CD4-positive, alpha-beta T cell (primary cell): ENCODE measurements at regions of chr6 and their contacts with region 1.

Region 1: DNA sequence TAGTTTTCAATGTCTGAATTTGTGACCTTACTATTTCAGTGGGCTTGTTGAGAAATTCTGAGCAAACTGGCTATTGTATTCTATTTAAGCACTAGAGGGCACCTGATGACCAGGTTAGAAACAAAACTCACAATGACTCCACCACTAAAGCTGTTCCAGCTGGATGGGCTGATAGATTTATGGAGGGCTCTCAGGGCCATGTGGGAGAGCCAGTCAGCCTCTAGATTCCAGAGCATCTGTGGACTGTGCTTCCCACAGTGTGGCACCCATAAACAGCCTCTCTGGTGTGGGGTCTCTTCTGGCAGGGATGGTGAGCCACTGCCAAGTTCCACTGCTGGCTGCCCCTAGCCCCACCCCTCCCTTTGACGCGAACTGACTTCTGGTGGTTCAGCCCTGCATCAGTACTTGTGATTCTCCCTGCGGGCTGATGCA is 29.2 kb downstream of the C6orf58 start:
- DNase-seq: peak in 3 of 14 experiments; percentile 18 to 26 (median 23)
- ATAC-seq: no peak
- H3K4me3 ChIP-seq: no peak overlapping the region
- H3K4me3 Mint-ChIP-seq: no peak overlapping the region
- H3K27ac ChIP-seq: no peak overlapping the region
- H3K27ac Mint-ChIP-seq: no peak overlapping the region
- H3K4me1 ChIP-seq: no peaks in the 10 kb centered on the region
- H3K4me1 Mint-ChIP-seq: no peaks in the 10 kb centered on the region
- H3K27me3 ChIP-seq: no peaks in the 10 kb centered on the region
- H3K27me3 Mint-ChIP-seq: no peaks in the 10 kb centered on the region
- CTCF ChIP-seq: no peak

Region 2: DNA sequence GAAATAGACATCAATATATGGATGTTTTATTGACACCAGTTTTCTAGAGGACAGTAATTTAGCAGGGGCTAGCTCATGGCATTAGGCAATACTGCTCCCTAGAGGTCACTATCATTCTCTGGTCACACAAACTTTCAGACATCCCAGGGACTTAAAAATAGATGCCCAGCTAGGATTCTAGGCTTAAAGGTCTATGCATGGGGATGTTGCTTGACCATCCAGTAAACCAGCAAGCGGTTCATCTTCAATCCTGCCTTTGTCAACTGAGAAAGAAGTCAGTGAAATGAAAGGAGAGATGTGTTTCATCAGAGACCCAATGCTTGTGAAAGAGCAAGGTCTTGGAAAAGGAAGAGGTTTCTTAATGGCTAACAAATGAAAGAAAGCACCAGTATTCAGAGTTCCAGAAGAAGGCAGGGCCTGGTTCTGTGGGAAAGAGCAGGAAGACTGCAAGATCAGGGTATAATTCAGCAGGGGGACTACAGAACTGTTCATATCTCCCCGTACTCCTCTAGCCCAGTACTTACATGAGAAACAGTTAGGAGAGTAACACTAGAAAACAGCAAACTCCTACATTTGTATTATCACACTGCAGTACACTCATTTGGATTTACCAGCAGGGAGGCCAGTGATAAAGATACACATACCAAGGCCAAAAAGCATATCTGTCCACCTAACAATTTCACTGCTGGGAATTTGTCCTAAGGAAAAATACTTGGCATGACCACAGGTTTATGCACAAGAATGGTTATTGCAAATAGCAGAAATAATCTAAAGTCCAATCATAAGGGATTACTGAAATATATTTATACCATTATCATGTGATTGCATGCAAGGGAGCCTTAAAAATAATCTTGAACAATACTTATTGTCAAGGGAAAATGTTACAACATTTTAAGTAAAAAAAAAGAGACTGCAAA is 1125.4 kb after region 1 on chr6:
- CTCF ChIA-PET with region 1: no interaction called
- POLR2A ChIA-PET with region 1: no interaction called
- intact Hi-C with region 1: loop called (anchors 5 to 10 kb)
- DNase-seq: peak in 3 of 14 experiments; percentile 9 to 38 (median 31)
- ATAC-seq: no peak
- H3K4me3 ChIP-seq: no peak overlapping the region
- H3K4me3 Mint-ChIP-seq: no peak overlapping the region
- H3K27ac ChIP-seq: no peak overlapping the region
- H3K27ac Mint-ChIP-seq: no peak overlapping the region
- H3K4me1 ChIP-seq: no peaks in the 10 kb centered on the region
- H3K4me1 Mint-ChIP-seq: no peaks in the 10 kb centered on the region
- H3K27me3 ChIP-seq: no peaks in the 10 kb centered on the region
- H3K27me3 Mint-ChIP-seq: peaks cover 24% of the 10 kb centered on the region
- CTCF ChIP-seq: peak; percentile 50

Region 3: GRCh38 chr6:129251669-129252376 is 1645.7 kb after region 1 on chr6:
- CTCF ChIA-PET with region 1: no interaction called
- POLR2A ChIA-PET with region 1: no interaction called
- intact Hi-C with region 1: loop called (anchors 5 kb)
- DNase-seq: peak in 12 of 14 experiments; percentile 3 to 71 (median 17)
- ATAC-seq: peak; percentile 68
- H3K4me3 ChIP-seq: no peak overlapping the region
- H3K4me3 Mint-ChIP-seq: no peak overlapping the region
- H3K27ac ChIP-seq: no peak overlapping the region
- H3K27ac Mint-ChIP-seq: no peak overlapping the region
- H3K4me1 ChIP-seq: no peaks in the 10 kb centered on the region
- H3K4me1 Mint-ChIP-seq: peaks cover 12% of the 10 kb centered on the region
- H3K27me3 ChIP-seq: peaks cover 0 to 18% of the 10 kb centered on the region in 2 experiments
- H3K27me3 Mint-ChIP-seq: peaks cover 42% of the 10 kb centered on the region
- CTCF ChIP-seq: peak; percentile 78

Region 4: GRCh38 chr6:129370268-129370916 is 1764.2 kb after region 1 on chr6:
- CTCF ChIA-PET with region 1: no interaction called
- POLR2A ChIA-PET with region 1: no interaction called
- intact Hi-C with region 1: loop called in 1 of 2 experiments (anchors 5 kb)
- DNase-seq: peak; percentile 4 to 62 (median 24)
- ATAC-seq: no peak
- H3K4me3 ChIP-seq: no peak overlapping the region
- H3K4me3 Mint-ChIP-seq: peak overlapping the region; percentile 45
- H3K27ac ChIP-seq: no peak overlapping the region
- H3K27ac Mint-ChIP-seq: no peak overlapping the region
- H3K4me1 ChIP-seq: no peaks in the 10 kb centered on the region
- H3K4me1 Mint-ChIP-seq: peaks cover 13% of the 10 kb centered on the region
- H3K27me3 ChIP-seq: no peaks in the 10 kb centered on the region
- H3K27me3 Mint-ChIP-seq: no peaks in the 10 kb centered on the region
- CTCF ChIP-seq: peak; percentile 83

Region 5: DNA sequence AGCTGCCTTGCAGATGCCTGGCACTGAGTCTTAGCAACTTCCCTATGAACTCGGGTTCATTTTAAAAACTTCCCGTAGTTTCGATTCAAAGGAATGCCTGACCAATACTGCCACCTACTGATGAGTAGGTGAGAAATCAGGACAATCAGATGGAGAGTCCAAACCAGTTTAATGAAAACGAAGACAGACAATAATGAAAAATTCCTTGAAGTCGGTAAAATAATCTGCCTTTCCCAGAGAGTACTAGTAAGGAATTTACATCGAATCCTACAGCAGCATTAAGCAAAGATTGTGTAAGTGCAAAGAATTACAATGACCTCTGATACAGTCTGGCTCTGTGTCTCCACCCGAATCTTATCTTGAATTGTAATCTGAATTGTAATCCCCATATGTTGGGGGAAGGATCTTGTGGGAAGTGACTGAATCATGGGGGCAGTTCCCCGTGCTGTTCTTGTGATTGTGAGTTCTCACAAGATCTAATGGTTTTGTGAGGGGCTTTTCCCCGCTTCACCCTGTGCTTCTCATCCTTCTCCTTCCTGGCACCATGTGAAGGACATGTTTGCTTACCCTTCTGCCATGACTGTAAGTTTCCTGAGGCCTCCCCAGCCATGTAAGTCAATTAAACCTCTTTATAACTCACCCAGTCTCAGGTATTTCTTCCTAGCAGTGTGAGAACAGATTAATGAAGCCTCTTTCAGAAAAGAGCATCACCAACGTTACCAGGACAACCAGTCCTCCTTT is 1969.4 kb after region 1 on chr6:
- CTCF ChIA-PET with region 1: no interaction called
- POLR2A ChIA-PET with region 1: no interaction called
- intact Hi-C with region 1: loop called in 1 of 2 experiments (anchors 10 kb)
- DNase-seq: peak in 4 of 14 experiments; percentile 5 to 54 (median 45)
- ATAC-seq: peak; percentile 49
- H3K4me3 ChIP-seq: peak overlapping the region; percentile 22
- H3K4me3 Mint-ChIP-seq: peak overlapping the region; percentile 34
- H3K27ac ChIP-seq: no peak overlapping the region
- H3K27ac Mint-ChIP-seq: no peak overlapping the region
- H3K4me1 ChIP-seq: no peaks in the 10 kb centered on the region
- H3K4me1 Mint-ChIP-seq: no peaks in the 10 kb centered on the region
- H3K27me3 ChIP-seq: no peaks in the 10 kb centered on the region
- H3K27me3 Mint-ChIP-seq: no peaks in the 10 kb centered on the region
- CTCF ChIP-seq: peak; percentile 84